CD4-positive, alpha-beta memory T cell (primary cell): ENCODE measurements at regions of chr16 and their contacts with region 1.

Region 1: GRCh38 chr16:89737341-89738071 is 16.2 kb downstream of the ZNF276 start:
- DNase-seq: peak; percentile 76 to 82 (median 81)
- H3K4me3 ChIP-seq: no peak overlapping the region
- H3K4me3 Mint-ChIP-seq: peak overlapping the region; percentile 20 to 82 (median 56)
- H3K27ac ChIP-seq: peak overlapping the region; percentile 31
- H3K27ac Mint-ChIP-seq: peak overlapping the region; percentile 74 to 92 (median 87)
- H3K4me1 ChIP-seq: peaks cover 49% of the 10 kb centered on the region
- H3K4me1 Mint-ChIP-seq: peaks cover 23 to 69% (median 39%) of the 10 kb centered on the region in 4 donors
- H3K27me3 ChIP-seq: no peaks in the 10 kb centered on the region
- H3K27me3 Mint-ChIP-seq: no peaks in the 10 kb centered on the region

Region 2: DNA sequence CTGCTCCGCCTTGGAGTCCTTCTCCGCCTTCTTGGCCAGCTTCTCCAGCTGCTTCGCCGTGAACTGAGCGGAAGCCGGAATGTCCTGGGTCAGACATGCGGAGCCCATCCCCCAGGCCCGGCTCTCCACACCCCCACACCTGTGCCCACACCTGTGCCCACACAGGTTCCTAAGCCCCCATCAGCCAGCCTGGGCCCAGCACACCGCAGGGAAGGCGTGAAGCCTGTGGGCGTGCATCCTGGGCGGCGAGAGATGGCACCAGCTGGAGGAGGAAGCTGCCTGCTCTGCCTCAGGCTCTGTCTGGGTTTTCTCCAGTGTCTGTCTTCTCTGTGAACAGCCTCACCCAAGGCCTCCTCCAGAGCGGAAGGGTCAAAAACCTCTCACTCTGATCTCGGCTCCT is 85.9 kb before region 1 on chr16:
- CTCF ChIA-PET with region 1: no interaction called
- POLR2A ChIA-PET with region 1: no interaction called
- intact Hi-C with region 1: no loop called
- DNase-seq: no peak
- H3K4me3 ChIP-seq: no peak overlapping the region
- H3K4me3 Mint-ChIP-seq: no peak overlapping the region
- H3K27ac ChIP-seq: no peak overlapping the region
- H3K27ac Mint-ChIP-seq: peak overlapping the region in 2 of 7 donors; percentile 9 to 43
- H3K4me1 ChIP-seq: peaks cover 10% of the 10 kb centered on the region
- H3K4me1 Mint-ChIP-seq: peaks cover 7 to 24% (median 17%) of the 10 kb centered on the region in 4 donors
- H3K27me3 ChIP-seq: no peaks in the 10 kb centered on the region
- H3K27me3 Mint-ChIP-seq: no peaks in the 10 kb centered on the region

Region 3: DNA sequence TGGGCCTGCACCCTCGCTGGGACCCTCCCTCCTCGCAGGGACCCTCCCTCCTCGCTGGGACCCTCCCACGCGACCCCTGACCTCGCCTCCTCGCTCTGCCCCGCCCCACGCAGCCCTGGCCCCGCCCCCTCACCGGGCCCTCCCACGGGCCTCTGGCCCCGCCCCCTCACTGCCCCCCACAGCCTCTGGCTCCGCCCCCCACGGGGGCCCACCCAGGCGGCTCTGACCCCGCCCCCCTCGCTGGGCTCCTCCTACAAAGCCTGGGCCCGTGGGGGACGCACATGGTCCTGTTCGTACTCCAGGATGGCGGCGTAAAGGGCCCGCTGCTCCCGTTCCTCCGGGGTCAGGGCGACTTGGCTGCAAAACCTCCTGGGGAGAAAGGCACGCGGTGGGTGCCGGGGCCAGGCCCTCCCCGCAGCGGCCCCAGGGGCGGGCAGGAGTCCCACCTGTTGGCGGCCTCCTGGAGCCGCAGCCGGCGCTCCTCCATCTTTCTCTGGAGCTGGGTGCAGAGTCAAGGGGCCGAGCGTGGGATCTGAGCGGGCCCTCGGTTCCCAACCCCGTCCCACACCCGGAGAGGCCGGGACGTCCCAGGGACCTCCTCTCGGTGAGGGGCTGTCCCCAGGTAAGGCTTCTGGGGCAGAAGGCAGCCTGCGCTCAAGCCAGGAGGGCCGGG is 25.8 kb before region 1 on chr16:
- CTCF ChIA-PET with region 1: interaction called, 42 read pairs
- POLR2A ChIA-PET with region 1: interaction called, 10 read pairs
- intact Hi-C with region 1: loop called (anchors 1 kb)
- DNase-seq: peak; percentile 45 to 55 (median 51)
- H3K4me3 ChIP-seq: peak overlapping the region in 1 of 2 donors; percentile 54
- H3K4me3 Mint-ChIP-seq: peak overlapping the region in 4 of 8 donors; percentile 28 to 68 (median 56)
- H3K27ac ChIP-seq: no peak overlapping the region
- H3K27ac Mint-ChIP-seq: no peak overlapping the region
- H3K4me1 ChIP-seq: peaks cover 9% of the 10 kb centered on the region
- H3K4me1 Mint-ChIP-seq: peaks cover 0 to 7% (median 1%) of the 10 kb centered on the region in 4 donors
- H3K27me3 ChIP-seq: no peaks in the 10 kb centered on the region
- H3K27me3 Mint-ChIP-seq: peaks cover 0 to 1% of the 10 kb centered on the region in 2 donors

Region 4: GRCh38 chr16:89749647-89750046 is 12.1 kb after region 1 on chr16:
- CTCF ChIA-PET with region 1: interaction called, 3 read pairs
- POLR2A ChIA-PET with region 1: interaction called, 18 read pairs
- intact Hi-C with region 1: no loop called
- DNase-seq: no peak
- H3K4me3 ChIP-seq: no peak overlapping the region
- H3K4me3 Mint-ChIP-seq: no peak overlapping the region
- H3K27ac ChIP-seq: no peak overlapping the region
- H3K27ac Mint-ChIP-seq: peak overlapping the region in 2 of 7 donors; percentile 57 to 70
- H3K4me1 ChIP-seq: no peaks in the 10 kb centered on the region
- H3K4me1 Mint-ChIP-seq: peaks cover 2 to 21% (median 4%) of the 10 kb centered on the region in 4 donors
- H3K27me3 ChIP-seq: no peaks in the 10 kb centered on the region
- H3K27me3 Mint-ChIP-seq: no peaks in the 10 kb centered on the region

Region 5: DNA sequence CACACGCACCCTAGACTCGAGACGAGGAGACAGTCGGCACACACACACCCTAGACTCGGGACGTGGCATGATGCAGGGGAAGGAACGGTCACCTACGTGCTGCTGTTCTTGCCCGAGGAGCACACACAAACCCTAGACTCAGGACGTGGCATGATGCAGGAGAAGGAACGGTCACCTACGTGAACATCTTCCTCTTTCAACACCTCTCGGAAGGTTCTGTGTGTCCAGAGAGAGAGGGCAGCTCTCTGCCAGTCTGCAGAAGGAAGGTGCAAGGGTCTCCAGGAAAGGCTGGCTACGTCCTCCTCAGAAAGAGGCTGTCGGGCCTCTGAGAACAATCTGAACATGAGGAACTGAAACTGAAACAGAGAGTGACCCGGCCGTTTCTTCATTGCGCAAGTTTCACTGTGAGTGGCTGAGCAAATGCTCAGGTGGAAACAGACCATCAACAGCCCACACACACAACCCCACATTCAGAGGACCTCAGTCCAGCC is 27.2 kb after region 1 on chr16:
- CTCF ChIA-PET with region 1: interaction called, 7 read pairs
- POLR2A ChIA-PET with region 1: interaction called, 14 read pairs
- intact Hi-C with region 1: no loop called
- DNase-seq: peak; percentile 26 to 67 (median 35)
- H3K4me3 ChIP-seq: peak overlapping the region; percentile 49 to 56
- H3K4me3 Mint-ChIP-seq: peak overlapping the region; percentile 87 to 95 (median 92)
- H3K27ac ChIP-seq: peak overlapping the region; percentile 75
- H3K27ac Mint-ChIP-seq: peak overlapping the region; percentile 81 to 98 (median 96)
- H3K4me1 ChIP-seq: peaks cover 50% of the 10 kb centered on the region
- H3K4me1 Mint-ChIP-seq: peaks cover 32 to 53% (median 45%) of the 10 kb centered on the region in 4 donors
- H3K27me3 ChIP-seq: no peaks in the 10 kb centered on the region
- H3K27me3 Mint-ChIP-seq: no peaks in the 10 kb centered on the region

Region 6: GRCh38 chr16:89785523-89786155 is 48.1 kb after region 1 on chr16:
- CTCF ChIA-PET with region 1: no interaction called
- POLR2A ChIA-PET with region 1: interaction called, 13 read pairs
- intact Hi-C with region 1: no loop called
- DNase-seq: peak; percentile 68 to 83 (median 71)
- H3K4me3 ChIP-seq: no peak overlapping the region
- H3K4me3 Mint-ChIP-seq: peak overlapping the region in 7 of 8 donors; percentile 13 to 82 (median 67)
- H3K27ac ChIP-seq: no peak overlapping the region
- H3K27ac Mint-ChIP-seq: peak overlapping the region; percentile 43 to 95 (median 77)
- H3K4me1 ChIP-seq: peaks cover 33% of the 10 kb centered on the region
- H3K4me1 Mint-ChIP-seq: peaks cover 24 to 42% (median 29%) of the 10 kb centered on the region in 4 donors
- H3K27me3 ChIP-seq: no peaks in the 10 kb centered on the region
- H3K27me3 Mint-ChIP-seq: no peaks in the 10 kb centered on the region